OCI-LY7 (cell line): ENCODE measurements at regions of chr6 and their contacts with region 1.

Region 1: GRCh38 chr6:15586503-15586902 is 76.3 kb downstream of the DTNBP1 start:
- DNase-seq: no peak
- H3K4me3 ChIP-seq: no peak overlapping the region
- H3K27ac ChIP-seq: no peak overlapping the region
- H3K4me1 ChIP-seq: no peaks in the 10 kb centered on the region
- CTCF ChIP-seq: no peak

Region 2: GRCh38 chr6:15572300-15573016 is 14.0 kb before region 1 on chr6:
- CTCF ChIA-PET with region 1: no interaction called
- POLR2A ChIA-PET with region 1: interaction called, 10 read pairs
- intact Hi-C with region 1: no loop called
- DNase-seq: no peak
- H3K4me3 ChIP-seq: no peak overlapping the region
- H3K27ac ChIP-seq: no peak overlapping the region
- H3K4me1 ChIP-seq: no peaks in the 10 kb centered on the region
- CTCF ChIP-seq: no peak